HAP-1 (cell line): ENCODE measurements at regions of chr11 and their contacts with region 1.

Region 1: DNA sequence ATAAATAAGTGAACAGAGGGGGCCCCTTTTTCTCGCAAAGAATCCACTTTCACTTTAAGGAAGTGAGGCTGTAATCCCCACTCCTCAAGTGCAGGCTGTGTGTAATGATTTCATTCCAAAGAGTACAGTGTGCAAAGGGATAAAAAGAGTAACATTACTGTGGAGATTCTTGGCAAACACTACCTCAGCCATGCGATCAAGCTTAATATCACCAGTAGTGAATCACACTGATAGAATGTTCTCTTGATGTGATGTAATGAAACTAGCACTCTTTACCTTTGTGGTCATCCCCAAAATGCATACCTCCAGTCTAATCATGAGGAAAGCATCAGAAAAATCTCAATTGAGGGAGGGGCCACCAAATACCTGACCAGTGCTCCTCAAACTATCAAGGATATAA is 246.1 kb upstream of the CHORDC1 start:
- DNase-seq: no peak
- H3K4me3 ChIP-seq: no peak overlapping the region
- H3K4me1 ChIP-seq: no peaks in the 10 kb centered on the region
- H3K27me3 ChIP-seq: peaks cover 4% of the 10 kb centered on the region

Region 2: GRCh38 chr11:90176069-90176468 is 292.9 kb before region 1 on chr11:
- in situ Hi-C with region 1: no loop called
- DNase-seq: no peak
- H3K4me3 ChIP-seq: no peak overlapping the region
- H3K4me1 ChIP-seq: no peaks in the 10 kb centered on the region
- H3K27me3 ChIP-seq: no peaks in the 10 kb centered on the region

Region 3: DNA sequence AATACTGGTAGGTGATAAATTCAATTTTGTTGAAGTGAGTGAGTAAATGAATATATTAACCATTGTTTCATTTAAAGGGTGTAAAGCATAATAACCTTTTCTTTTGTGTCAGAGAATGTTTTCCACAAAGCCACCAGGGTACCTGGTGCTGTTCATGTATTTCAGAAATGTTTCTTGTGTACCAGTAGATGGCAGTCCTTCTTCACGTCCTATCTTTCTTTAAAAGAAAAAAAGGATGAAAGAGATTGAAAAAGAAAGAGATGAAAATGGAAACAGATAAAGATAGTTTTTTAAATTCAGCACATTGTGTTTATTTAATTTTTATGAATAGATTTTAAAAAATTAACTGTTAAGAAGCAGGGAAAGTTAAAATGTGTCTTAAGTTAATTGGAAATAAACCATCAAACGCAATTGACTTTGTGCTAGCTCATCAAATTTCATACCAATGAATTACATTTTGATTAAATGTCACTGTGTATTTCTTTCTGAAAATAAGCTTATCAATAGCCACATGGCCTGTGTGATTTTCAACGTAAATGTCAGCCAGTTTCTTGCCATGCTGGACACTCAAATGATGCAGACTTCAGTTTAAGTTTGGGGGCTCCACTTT is 180.6 kb before region 1 on chr11:
- in situ Hi-C with region 1: loop called (anchors 25 kb)
- DNase-seq: peak in 1 of 2 experiments; percentile 68
- H3K4me3 ChIP-seq: no peak overlapping the region
- H3K4me1 ChIP-seq: no peaks in the 10 kb centered on the region
- H3K27me3 ChIP-seq: no peaks in the 10 kb centered on the region

Region 4: GRCh38 chr11:90997241-90997640 is 528.3 kb after region 1 on chr11:
- in situ Hi-C with region 1: no loop called
- DNase-seq: no peak
- H3K4me3 ChIP-seq: no peak overlapping the region
- H3K4me1 ChIP-seq: no peaks in the 10 kb centered on the region
- H3K27me3 ChIP-seq: 0 out of 2 replicates have a peak, but pooled peaks cover 3% of the 10 kb centered on the region